ENCODE measurements at regions of chr13 and their contacts with region 1.

Region 1: DNA sequence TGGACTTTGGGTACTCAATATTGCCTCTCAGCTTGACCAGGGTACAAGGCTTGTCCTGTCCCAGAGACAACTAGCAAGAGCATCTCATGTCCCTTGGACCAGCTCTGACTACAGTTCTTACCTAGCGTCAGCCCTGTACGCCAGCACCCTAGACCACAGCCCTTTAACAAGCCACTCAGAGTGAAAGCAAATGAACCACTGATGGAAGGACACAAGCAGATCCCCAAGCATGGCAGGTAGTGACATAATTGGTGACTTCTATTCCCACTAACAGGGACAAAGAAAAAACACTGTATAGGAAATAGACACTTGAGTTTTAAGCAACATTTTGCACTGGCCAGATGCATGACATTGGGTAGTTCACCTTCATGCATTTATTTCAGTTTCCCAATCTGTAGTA is 8.8 kb upstream of the LRCH1 start:
- DNase-seq: no peak
- H3K4me3 ChIP-seq: no peak overlapping the region
- H3K27ac ChIP-seq: no peak overlapping the region
- H3K4me1 ChIP-seq: no peaks in the 10 kb centered on the region
- H3K27me3 ChIP-seq: no peaks in the 10 kb centered on the region
- CTCF ChIP-seq: no peak
- EP300 ChIP-seq: no peak
- POLR2A ChIP-seq: no peak

Region 2: GRCh38 chr13:46698910-46699460 is 154.8 kb after region 1 on chr13:
- in situ Hi-C with region 1: no loop called
- intact Hi-C with region 1: no loop called
- DNase-seq: no peak
- H3K4me3 ChIP-seq: no peak overlapping the region
- H3K27ac ChIP-seq: peak overlapping the region; percentile 7 to 45 (median 20)
- H3K4me1 ChIP-seq: peaks cover 0 to 15% (median 7%) of the 10 kb centered on the region in 4 donors
- H3K27me3 ChIP-seq: no peaks in the 10 kb centered on the region
- CTCF ChIP-seq: no peak
- EP300 ChIP-seq: no peak
- POLR2A ChIP-seq: no peak

Region 3: GRCh38 chr13:46712524-46712923 is 168.3 kb after region 1 on chr13:
- in situ Hi-C with region 1: loop called in 1 of 4 experiments (anchors 10 kb)
- intact Hi-C with region 1: no loop called
- DNase-seq: no peak
- H3K4me3 ChIP-seq: no peak overlapping the region
- H3K27ac ChIP-seq: no peak overlapping the region
- H3K4me1 ChIP-seq: no peaks in the 10 kb centered on the region
- H3K27me3 ChIP-seq: no peaks in the 10 kb centered on the region
- CTCF ChIP-seq: no peak
- EP300 ChIP-seq: no peak
- POLR2A ChIP-seq: no peak

Measured in transverse colon (tissue), 4 donors.